ENCODE measurements at regions of chr6 and their contacts with region 1.

Region 1: GRCh38 chr6:4055420-4056041 is 23.4 kb downstream of the FAM217A start:
- DNase-seq: peak; percentile 73
- H3K4me3 ChIP-seq: no peak overlapping the region
- H3K27ac ChIP-seq: peak overlapping the region; percentile 37
- H3K4me1 ChIP-seq: peaks cover 39% of the 10 kb centered on the region
- H3K27me3 ChIP-seq: no peaks in the 10 kb centered on the region
- CTCF ChIP-seq: peak; percentile 52 to 67

Region 2: GRCh38 chr6:4115746-4116145 is 60.2 kb after region 1 on chr6:
- CTCF ChIA-PET with region 1: no interaction called
- dilution Hi-C with region 1: loop called (anchors 5 kb)
- in situ Hi-C with region 1: no loop called
- intact Hi-C with region 1: no loop called
- DNase-seq: no peak
- H3K4me3 ChIP-seq: no peak overlapping the region
- H3K27ac ChIP-seq: no peak overlapping the region
- H3K4me1 ChIP-seq: no peaks in the 10 kb centered on the region
- H3K27me3 ChIP-seq: no peaks in the 10 kb centered on the region
- CTCF ChIP-seq: no peak

Region 3: DNA sequence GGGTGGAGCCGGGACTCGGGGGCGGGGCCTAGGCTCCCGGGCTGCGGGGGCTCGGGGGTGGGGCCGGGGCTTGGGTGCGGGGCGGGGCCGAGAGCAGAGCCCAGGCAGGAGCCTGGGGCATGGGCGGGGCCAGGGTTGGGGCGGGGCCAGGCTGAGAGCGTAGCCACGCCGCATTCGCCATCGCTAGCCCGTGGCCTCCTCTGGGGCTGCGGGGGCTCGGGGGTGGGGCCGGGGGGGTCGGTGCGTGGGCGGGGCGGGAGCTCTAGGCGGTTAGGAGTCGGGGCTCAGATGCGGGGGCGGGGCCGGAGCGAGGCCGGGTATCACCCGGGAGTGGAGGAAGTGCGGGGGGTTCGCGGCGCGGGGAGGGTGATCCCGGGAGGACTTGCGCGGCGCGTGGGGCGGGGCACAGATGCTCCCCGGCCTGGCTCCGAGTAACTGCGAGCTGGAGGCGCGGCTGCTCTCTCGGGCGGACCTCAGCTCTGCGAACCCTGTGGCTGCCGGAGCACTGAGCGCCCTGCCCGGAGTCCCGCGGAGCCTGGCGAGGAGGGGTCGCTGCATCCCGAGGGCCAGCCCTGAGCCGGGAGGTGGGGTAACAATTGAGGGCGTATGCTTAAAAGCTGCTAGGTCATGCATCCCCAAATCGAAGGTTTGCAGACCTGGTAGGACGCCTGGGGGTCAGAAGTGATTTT is 80.3 kb after region 1 on chr6:
- CTCF ChIA-PET with region 1: interaction called, 3 read pairs
- dilution Hi-C with region 1: no loop called
- in situ Hi-C with region 1: loop called in 1 of 2 experiments (anchors 10 kb)
- intact Hi-C with region 1: loop called (anchors 1 kb)
- DNase-seq: peak; percentile 82
- H3K4me3 ChIP-seq: peak overlapping the region; percentile 50 to 66 (median 62)
- H3K27ac ChIP-seq: peak overlapping the region; percentile 43
- H3K4me1 ChIP-seq: peaks cover 9% of the 10 kb centered on the region
- H3K27me3 ChIP-seq: no peaks in the 10 kb centered on the region
- CTCF ChIP-seq: no peak

Region 4: DNA sequence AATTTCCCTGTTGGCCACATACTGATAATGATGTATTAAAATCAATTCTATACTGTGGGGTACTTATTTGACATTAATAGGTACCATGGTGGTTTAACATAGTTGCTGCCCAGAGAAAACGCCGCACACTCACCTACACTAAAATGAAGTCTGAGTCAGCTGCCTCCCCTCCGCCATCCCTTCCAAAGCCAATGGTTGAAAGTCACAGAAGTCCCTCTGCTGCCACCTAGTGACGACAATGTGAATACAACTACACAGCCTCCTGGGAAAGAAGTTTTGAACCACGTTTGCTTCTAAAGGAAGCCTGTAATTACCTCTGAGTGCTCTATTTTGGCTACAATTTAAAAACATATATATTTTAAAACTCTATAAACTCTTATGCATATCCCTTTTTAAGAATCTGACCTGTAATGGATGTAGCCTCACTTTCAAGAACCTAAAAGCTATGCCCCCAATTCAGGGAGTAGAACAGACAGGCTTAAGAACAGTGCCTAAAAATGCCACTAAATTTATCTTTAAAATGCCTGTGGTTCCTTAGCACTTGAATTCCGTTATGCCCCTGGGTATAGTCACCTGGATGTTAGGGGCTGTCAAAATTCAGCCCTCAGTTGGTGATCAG is 100.4 kb after region 1 on chr6:
- CTCF ChIA-PET with region 1: no interaction called
- dilution Hi-C with region 1: no loop called
- in situ Hi-C with region 1: loop called in 1 of 2 experiments (anchors 5 kb)
- intact Hi-C with region 1: loop called (anchors 1 kb)
- DNase-seq: peak; percentile 78
- H3K4me3 ChIP-seq: no peak overlapping the region
- H3K27ac ChIP-seq: no peak overlapping the region
- H3K4me1 ChIP-seq: peaks cover 5% of the 10 kb centered on the region
- H3K27me3 ChIP-seq: no peaks in the 10 kb centered on the region
- CTCF ChIP-seq: peak; percentile 78 to 79